ENCODE measurements at regions of chr17 and their contacts with region 1.

Region 1: GRCh38 chr17:44394833-44395232 is 5.4 kb upstream of the ITGA2B start:
- DNase-seq: no peak
- ATAC-seq: no peak
- H3K4me3 Mint-ChIP-seq: no peak overlapping the region
- H3K27ac Mint-ChIP-seq: no peak overlapping the region
- H3K4me1 Mint-ChIP-seq: peaks cover 20% of the 10 kb centered on the region
- H3K27me3 Mint-ChIP-seq: no peaks in the 10 kb centered on the region

Region 2: DNA sequence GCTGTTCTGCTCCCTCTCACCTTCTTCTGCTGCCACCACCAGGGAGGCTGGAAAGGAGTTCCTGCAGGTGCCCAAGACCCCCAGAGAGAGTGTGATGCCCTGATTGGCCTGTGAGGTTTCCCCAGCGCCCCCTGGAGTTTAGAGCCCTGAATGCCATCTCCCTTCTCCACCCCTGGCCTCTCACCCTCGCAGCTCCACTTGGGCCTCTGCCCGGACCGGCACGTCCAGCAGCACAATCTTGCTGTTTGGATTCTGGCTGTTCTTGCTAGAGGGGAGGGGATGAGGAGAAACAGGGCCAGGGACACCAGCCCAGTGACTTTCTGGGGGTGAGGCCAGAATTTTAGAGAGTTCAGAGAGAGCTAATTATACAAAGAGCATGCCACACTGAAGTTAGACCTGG is 18.7 kb before region 1 on chr17:
- CTCF ChIA-PET with region 1: interaction called, 10 read pairs
- POLR2A ChIA-PET with region 1: no interaction called
- intact Hi-C with region 1: no loop called
- DNase-seq: peak; percentile 54
- ATAC-seq: peak; percentile 65
- H3K4me3 Mint-ChIP-seq: no peak overlapping the region
- H3K27ac Mint-ChIP-seq: no peak overlapping the region
- H3K4me1 Mint-ChIP-seq: no peaks in the 10 kb centered on the region
- H3K27me3 Mint-ChIP-seq: peaks cover 9% of the 10 kb centered on the region

Measured in activated CD4-positive, alpha-beta T cell treated with anti-CD3 and anti-CD28 coated beads for 36 hours (primary cell).